ENCODE measurements at regions of chr20 and their contacts with region 1.

Region 1: DNA sequence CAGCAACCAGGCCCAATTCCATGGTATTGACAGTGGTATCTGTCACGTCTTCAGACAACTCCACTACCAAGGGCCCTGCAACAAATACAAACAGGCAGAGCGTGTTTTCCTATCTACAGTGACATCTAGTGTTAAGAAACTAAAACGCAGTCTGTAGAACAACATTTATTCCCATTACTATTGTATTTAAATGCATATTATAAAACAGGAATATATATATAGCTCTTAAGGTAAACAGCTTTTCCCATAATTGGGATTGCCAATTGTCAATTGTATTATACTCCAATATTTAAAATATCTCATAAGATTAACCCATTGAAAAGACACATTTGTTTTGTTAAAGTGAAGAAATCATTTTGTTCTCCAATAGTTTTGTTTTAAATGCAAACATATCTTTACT is 97.2 kb downstream of the KIF16B start:
- DNase-seq: peak; percentile 43 to 53
- H3K4me3 ChIP-seq: no peak overlapping the region
- H3K4me3 Mint-ChIP-seq: peak overlapping the region; percentile 12
- H3K27ac Mint-ChIP-seq: no peak overlapping the region
- H3K4me1 ChIP-seq: peaks cover 76% of the 10 kb centered on the region
- H3K4me1 Mint-ChIP-seq: peaks cover 40% of the 10 kb centered on the region
- H3K27me3 ChIP-seq: no peaks in the 10 kb centered on the region
- H3K27me3 Mint-ChIP-seq: no peaks in the 10 kb centered on the region
- CTCF ChIP-seq: peak; percentile 58 to 76

Region 2: GRCh38 chr20:15708984-15709598 is 766.9 kb before region 1 on chr20:
- CTCF ChIA-PET with region 1: no interaction called
- POLR2A ChIA-PET with region 1: no interaction called
- intact Hi-C with region 1: loop called (anchors 10 kb)
- DNase-seq: peak; percentile 43 to 62
- H3K4me3 ChIP-seq: no peak overlapping the region
- H3K4me3 Mint-ChIP-seq: no peak overlapping the region
- H3K27ac Mint-ChIP-seq: no peak overlapping the region
- H3K4me1 ChIP-seq: peaks cover 8% of the 10 kb centered on the region; the same call in 1 of the 2 replicates
- H3K4me1 Mint-ChIP-seq: peaks cover 14% of the 10 kb centered on the region
- H3K27me3 ChIP-seq: no peaks in the 10 kb centered on the region
- H3K27me3 Mint-ChIP-seq: no peaks in the 10 kb centered on the region
- CTCF ChIP-seq: peak; percentile 30 to 45

Region 3: GRCh38 chr20:15930311-15931305 is 545.4 kb before region 1 on chr20:
- CTCF ChIA-PET with region 1: no interaction called
- POLR2A ChIA-PET with region 1: no interaction called
- intact Hi-C with region 1: loop called (anchors 5 kb)
- DNase-seq: peak in 1 of 2 experiments; percentile 43
- H3K4me3 ChIP-seq: no peak overlapping the region
- H3K4me3 Mint-ChIP-seq: no peak overlapping the region
- H3K27ac Mint-ChIP-seq: no peak overlapping the region
- H3K4me1 ChIP-seq: no peaks in the 10 kb centered on the region
- H3K4me1 Mint-ChIP-seq: peaks cover 7% of the 10 kb centered on the region
- H3K27me3 ChIP-seq: no peaks in the 10 kb centered on the region
- H3K27me3 Mint-ChIP-seq: no peaks in the 10 kb centered on the region
- CTCF ChIP-seq: peak; percentile 53 to 67

Region 4: GRCh38 chr20:16293590-16293989 is 182.4 kb before region 1 on chr20:
- CTCF ChIA-PET with region 1: interaction called, 4 read pairs
- POLR2A ChIA-PET with region 1: no interaction called
- intact Hi-C with region 1: loop called (anchors 5 kb)
- DNase-seq: no peak
- H3K4me3 ChIP-seq: no peak overlapping the region
- H3K4me3 Mint-ChIP-seq: no peak overlapping the region
- H3K27ac Mint-ChIP-seq: no peak overlapping the region
- H3K4me1 ChIP-seq: peaks cover 33% of the 10 kb centered on the region
- H3K4me1 Mint-ChIP-seq: peaks cover 16% of the 10 kb centered on the region
- H3K27me3 ChIP-seq: no peaks in the 10 kb centered on the region
- H3K27me3 Mint-ChIP-seq: no peaks in the 10 kb centered on the region
- CTCF ChIP-seq: no peak

Region 5: GRCh38 chr20:16407251-16408067 is 68.6 kb before region 1 on chr20:
- CTCF ChIA-PET with region 1: interaction called, 3 read pairs
- POLR2A ChIA-PET with region 1: no interaction called
- intact Hi-C with region 1: loop called (anchors 1 kb)
- DNase-seq: peak; percentile 86 to 94
- H3K4me3 ChIP-seq: no peak overlapping the region
- H3K4me3 Mint-ChIP-seq: peak overlapping the region; percentile 61
- H3K27ac Mint-ChIP-seq: peak overlapping the region; percentile 57
- H3K4me1 ChIP-seq: peaks cover 36% of the 10 kb centered on the region
- H3K4me1 Mint-ChIP-seq: peaks cover 23% of the 10 kb centered on the region
- H3K27me3 ChIP-seq: no peaks in the 10 kb centered on the region
- H3K27me3 Mint-ChIP-seq: no peaks in the 10 kb centered on the region
- CTCF ChIP-seq: no peak

Region 6: DNA sequence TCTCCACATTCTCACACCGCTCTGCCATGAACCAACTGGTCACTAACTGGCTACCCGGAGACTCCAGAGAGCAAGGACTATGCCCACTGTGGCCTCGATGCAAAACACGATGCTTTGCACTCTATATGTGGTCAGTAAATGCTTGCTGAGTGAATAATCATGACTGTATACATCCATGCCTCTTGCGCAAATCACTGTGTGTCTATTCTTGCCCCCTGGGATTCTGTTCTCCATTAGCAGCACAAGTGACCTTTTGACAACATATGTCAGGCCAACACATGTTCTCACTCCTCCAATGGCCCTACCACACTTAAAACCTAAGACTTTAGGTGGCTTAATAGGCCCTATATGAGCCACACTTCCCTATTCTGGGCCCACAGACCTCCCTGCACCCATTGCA is 80.3 kb after region 1 on chr20:
- CTCF ChIA-PET with region 1: no interaction called
- POLR2A ChIA-PET with region 1: no interaction called
- intact Hi-C with region 1: no loop called
- DNase-seq: no peak
- H3K4me3 ChIP-seq: no peak overlapping the region
- H3K4me3 Mint-ChIP-seq: no peak overlapping the region
- H3K27ac Mint-ChIP-seq: no peak overlapping the region
- H3K4me1 ChIP-seq: no peaks in the 10 kb centered on the region
- H3K4me1 Mint-ChIP-seq: no peaks in the 10 kb centered on the region
- H3K27me3 ChIP-seq: no peaks in the 10 kb centered on the region
- H3K27me3 Mint-ChIP-seq: no peaks in the 10 kb centered on the region
- CTCF ChIP-seq: no peak

Region 7: DNA sequence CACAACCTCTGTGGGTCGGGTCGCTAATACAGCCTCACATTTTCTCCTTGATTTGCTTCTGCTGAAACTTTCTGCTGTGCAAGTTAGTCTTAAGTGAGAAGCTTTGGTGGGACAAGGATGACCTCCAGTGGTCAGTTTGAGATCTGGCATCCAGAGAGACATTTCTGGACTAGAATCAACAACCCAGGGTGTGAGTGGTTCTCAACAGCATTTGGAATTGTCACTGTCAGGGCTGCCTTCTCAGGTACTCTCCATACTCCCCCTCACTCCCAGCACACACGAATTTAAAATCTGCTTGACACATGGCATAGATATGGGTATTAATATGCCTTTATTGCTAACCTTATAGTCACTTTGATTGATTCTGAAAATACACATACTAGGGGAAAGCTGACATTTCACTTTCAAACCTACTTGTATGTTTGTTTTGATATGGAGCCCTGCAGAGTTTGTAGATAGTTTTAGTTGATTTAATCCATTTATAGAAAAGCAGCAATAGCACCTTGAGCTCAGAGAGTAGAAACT is 285.3 kb after region 1 on chr20:
- CTCF ChIA-PET with region 1: interaction called, 5 read pairs
- POLR2A ChIA-PET with region 1: no interaction called
- intact Hi-C with region 1: loop called (anchors 5 kb)
- DNase-seq: peak; percentile 71 to 72
- H3K4me3 ChIP-seq: no peak overlapping the region
- H3K4me3 Mint-ChIP-seq: peak overlapping the region; percentile 12
- H3K27ac Mint-ChIP-seq: no peak overlapping the region
- H3K4me1 ChIP-seq: peaks cover 10% of the 10 kb centered on the region
- H3K4me1 Mint-ChIP-seq: peaks cover 7% of the 10 kb centered on the region
- H3K27me3 ChIP-seq: no peaks in the 10 kb centered on the region
- H3K27me3 Mint-ChIP-seq: peaks cover 3% of the 10 kb centered on the region
- CTCF ChIP-seq: peak; percentile 81 to 84